ENCODE measurements at regions of chr17 and their contacts with region 1.

Region 1: GRCh38 chr17:81484195-81484979 is 28.2 kb downstream of the ACTG1 start:
- DNase-seq: peak; percentile 93
- ATAC-seq: peak; percentile 64
- H3K4me3 Mint-ChIP-seq: peak overlapping the region; percentile 52
- H3K27ac Mint-ChIP-seq: no peak overlapping the region
- H3K4me1 Mint-ChIP-seq: peaks cover 11% of the 10 kb centered on the region
- H3K27me3 Mint-ChIP-seq: peaks cover 64% of the 10 kb centered on the region
- CTCF ChIP-seq: peak; percentile 96

Region 2: DNA sequence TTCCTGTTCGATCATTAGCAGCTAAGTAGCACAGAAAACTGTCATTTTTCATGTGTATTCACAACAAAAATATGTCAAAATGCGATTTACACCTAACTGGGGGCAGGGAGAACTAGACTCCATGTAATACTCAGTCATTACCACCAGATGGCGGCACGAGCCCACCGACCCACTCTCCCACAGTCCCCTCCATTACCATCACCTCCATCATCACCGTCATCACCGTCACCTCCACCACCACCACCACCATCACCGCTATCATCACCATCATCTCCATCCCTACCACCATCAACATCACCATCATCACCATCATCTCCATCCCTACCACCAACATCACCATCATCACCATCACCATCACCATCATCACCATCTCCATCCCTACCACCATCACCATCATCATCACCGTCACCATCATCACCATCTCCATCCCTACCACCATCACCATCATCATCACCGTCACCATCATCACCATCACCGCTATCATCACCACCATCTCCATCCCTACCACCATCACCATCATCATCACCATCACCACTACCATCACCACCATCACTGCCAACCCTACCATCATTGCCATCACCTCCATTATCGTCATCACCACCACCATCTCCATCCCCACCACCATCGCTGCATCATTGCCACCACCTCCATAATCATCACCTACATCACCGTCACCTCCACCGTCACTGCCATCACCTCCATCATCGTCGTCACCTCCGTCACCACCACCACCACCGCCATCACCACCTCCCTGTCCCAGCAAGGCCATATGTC is 230.8 kb before region 1 on chr17:
- CTCF ChIA-PET with region 1: interaction called, 25 read pairs
- POLR2A ChIA-PET with region 1: no interaction called
- DNase-seq: peak; percentile 57
- ATAC-seq: peak; percentile 29; the same call in 1 of the 2 replicates
- H3K4me3 Mint-ChIP-seq: no peak overlapping the region
- H3K27ac Mint-ChIP-seq: peak overlapping the region; percentile 77; the same call in 1 of the 2 replicates
- H3K4me1 Mint-ChIP-seq: peaks cover 24% of the 10 kb centered on the region
- H3K27me3 Mint-ChIP-seq: no peaks in the 10 kb centered on the region
- CTCF ChIP-seq: peak; percentile 84

Region 3: DNA sequence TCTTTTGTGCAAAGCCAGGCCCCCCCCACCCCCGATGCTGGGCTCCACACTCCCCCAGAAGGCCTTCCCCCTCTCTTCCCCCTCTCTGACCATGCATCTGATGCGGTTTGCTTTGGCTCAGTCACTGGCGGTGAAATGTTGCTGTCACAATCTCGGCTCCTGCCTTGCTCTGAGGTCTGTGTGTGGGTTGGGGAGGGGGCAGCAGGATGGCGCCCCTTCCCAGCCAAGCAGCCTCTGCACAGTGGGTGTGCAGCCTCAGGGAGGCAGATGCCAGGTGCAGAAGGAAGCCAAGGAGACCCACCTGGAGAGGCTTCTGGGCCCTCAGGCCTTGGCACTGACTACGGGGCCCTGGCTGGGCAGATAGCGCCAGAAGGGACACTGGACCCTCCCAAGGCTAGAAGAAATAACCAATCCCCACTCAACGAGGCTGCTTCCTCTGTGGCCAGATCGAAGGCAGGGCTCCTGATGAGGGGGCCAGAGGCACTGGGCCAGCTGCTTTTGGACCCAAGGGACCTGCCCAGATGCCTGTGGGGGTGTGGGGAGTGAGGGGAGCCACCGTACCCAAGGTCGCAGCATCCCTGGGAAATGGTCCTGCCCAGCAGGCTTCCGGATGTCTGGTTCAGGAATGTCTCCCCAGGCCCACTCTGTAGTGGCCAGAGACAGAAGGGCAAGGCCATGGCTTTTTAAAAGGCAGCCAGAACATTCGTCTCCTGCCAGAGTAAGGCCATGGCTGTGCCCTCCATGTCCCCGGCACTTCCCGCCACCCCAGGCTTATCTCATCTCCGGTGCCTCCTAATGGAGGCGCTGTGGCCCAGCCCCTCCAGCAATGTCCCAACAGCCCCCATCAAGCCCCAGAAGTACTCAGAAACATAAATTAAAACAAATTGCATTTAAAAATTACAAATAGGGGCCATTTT is 145.9 kb before region 1 on chr17:
- CTCF ChIA-PET with region 1: no interaction called
- POLR2A ChIA-PET with region 1: no interaction called
- DNase-seq: no peak
- ATAC-seq: no peak
- H3K4me3 Mint-ChIP-seq: peak overlapping the region; percentile 35
- H3K27ac Mint-ChIP-seq: 0 out of 2 replicates have a peak overlapping the region, but pooled peaks have one; percentile 20
- H3K4me1 Mint-ChIP-seq: peaks cover 29% of the 10 kb centered on the region
- H3K27me3 Mint-ChIP-seq: peaks cover 46% of the 10 kb centered on the region
- CTCF ChIP-seq: no peak

Region 4: DNA sequence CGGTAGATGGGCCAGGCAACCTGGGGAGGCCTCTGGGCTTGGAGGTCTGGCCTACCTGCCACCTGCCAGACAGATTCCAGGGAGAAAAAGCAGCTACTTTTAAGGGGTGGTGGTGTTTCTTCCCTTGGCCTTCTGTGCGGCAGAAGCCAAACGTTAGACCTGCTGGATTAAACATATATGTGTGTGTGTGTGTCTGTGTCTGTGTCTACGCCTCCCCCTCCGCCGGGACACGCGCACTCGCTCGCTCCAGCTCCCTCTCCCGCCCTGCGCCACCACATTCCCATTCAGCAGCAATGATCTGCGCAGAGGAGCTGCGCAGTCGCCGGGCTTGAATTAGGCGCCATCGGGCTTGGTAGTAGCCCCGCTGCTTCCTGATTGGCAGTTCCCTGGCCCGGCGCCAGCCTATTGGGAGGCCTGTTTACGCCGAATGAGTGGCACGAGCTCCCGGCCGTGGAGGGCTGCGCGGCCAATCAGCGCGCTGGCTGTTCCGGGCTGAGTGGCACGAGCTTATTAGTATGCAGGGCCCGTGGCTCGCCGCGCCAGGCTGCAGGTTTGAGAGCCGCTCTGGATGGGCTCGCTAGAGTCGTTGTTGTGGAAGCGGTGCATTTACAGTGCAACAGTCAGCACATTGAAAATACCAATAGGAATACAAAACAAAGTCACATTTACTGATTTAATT is 89.3 kb before region 1 on chr17 and contains the start of gene BAHCC1:
- CTCF ChIA-PET with region 1: interaction called, 55 read pairs
- POLR2A ChIA-PET with region 1: interaction called, 4 read pairs
- DNase-seq: peak; percentile 100
- ATAC-seq: peak; percentile 78
- H3K4me3 Mint-ChIP-seq: peak within 1 kb of the TSS; percentile 72
- H3K27ac Mint-ChIP-seq: peak within 1 kb of the TSS; percentile 93
- H3K4me1 Mint-ChIP-seq: peaks cover 34% of the 10 kb centered on the region
- H3K27me3 Mint-ChIP-seq: peaks cover 69% of the 10 kb centered on the region
- CTCF ChIP-seq: no peak
- total RNA-seq, gene BAHCC1: 17.1 to 29.8 TPM (median 21.5 TPM) in 3 replicates

Region 5: DNA sequence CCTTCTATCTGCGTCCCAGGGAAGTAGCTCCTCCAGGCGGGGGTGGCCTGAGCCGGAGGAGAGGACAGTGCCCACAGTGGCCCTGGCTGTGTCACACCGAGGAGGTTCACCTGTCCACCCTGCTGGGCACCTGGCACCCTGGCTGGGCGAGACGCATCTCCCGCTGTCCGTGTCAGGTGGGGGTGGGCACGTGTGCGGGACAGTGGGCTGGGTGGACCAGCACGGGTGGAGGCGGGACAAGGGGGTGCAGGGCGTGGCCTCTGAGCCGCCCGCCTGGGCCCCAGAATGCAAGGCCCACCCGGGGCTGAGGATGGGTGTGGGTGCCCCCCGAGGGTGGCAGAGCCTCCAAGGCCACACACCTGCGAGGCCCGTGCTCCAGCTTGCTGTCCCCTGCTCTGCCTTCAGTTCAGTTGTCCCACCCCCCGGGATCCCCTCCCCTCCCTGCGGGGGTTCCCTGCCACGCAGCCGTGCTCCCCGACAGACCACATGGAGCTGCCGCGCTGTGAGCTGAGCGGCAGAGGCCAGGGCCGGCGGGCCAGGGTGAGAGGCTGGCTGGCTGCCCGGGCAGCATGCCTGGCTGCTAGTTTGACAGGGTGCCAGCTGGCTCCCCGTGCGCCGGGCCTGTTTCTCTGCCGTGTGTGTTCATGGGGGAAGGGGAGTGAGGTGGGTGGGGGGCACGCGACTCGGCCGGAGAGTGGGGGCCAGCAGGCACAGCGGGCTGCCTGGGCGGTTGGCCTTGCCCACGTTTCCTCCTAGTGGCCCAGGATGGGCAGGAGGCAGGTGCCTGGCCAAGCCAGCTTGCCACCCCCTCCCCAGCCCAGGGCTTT is 55.2 kb before region 1 on chr17:
- CTCF ChIA-PET with region 1: interaction called, 11 read pairs
- POLR2A ChIA-PET with region 1: no interaction called
- DNase-seq: no peak
- ATAC-seq: no peak
- H3K4me3 Mint-ChIP-seq: no peak overlapping the region
- H3K27ac Mint-ChIP-seq: no peak overlapping the region
- H3K4me1 Mint-ChIP-seq: no peaks in the 10 kb centered on the region
- H3K27me3 Mint-ChIP-seq: no peaks in the 10 kb centered on the region
- CTCF ChIP-seq: no peak

Region 6: DNA sequence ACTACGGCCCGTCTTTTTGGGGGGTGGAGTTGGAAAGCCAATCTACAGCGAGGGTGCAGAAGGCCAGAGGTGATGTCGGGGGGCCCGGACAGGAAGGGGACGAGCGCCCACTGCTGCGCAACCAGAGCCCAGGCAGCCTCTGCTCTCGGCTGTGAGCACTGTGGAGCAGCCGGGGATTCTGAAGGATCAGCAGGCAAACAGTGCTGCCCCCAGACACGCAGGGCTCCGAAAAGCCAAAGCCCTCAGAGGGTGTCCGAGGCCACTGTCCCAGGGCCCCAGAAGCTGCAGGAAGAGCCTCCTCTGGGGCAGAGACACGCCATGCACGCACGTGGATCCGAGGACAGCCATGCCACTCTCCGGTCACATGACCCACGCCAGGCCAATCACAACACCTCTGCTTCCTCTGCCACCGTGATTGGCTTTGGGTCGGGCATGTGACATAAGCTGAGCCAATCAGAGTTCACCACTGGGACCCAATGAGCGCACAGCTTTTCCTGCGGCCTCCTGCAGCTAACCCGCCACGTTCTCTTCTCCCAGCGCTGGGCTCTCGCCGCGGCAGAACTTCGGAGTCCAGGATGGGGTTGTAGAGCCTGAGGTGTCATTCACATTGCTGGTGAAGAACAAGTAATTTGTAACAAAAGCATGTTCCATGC is 12.5 kb before region 1 on chr17:
- CTCF ChIA-PET with region 1: interaction called, 11 read pairs
- POLR2A ChIA-PET with region 1: no interaction called
- DNase-seq: peak; percentile 55
- ATAC-seq: peak; percentile 69
- H3K4me3 Mint-ChIP-seq: no peak overlapping the region
- H3K27ac Mint-ChIP-seq: no peak overlapping the region
- H3K4me1 Mint-ChIP-seq: no peaks in the 10 kb centered on the region
- H3K27me3 Mint-ChIP-seq: no peaks in the 10 kb centered on the region; the same call in none of the 2 replicates
- CTCF ChIP-seq: no peak

Region 7: DNA sequence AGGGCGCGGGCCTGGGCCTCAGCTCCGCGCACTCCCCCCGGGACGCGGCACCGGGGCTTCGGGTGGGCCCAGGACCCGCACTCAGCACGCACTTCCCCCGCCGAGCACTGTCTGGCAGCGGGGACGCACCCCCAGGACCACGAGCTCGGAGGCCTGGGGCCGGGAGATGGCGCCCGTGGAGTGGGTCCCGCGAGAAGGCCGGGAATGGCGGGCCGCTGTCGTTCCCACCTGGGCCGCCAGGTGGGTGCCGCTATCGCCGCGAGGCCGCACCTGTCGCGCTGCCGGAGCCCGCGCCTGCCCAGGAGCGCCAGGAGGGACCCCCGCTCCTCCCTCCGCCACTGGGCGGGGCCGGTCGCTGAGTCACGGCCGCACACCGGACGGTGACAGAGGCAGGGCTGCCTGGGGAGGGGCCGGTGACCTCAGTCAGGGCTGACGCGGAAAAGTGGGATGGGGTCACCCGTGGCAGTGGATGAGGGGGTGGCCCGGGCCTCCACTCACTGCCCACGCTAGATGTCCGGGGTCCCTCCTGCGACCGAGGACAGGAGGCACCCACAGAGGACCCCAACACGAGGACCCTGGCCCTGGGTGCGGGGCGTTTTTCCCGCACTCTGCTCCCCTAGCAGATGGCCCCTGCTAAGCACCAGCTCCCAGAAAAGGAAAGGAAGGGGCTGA is 35.0 kb after region 1 on chr17:
- CTCF ChIA-PET with region 1: interaction called, 30 read pairs
- POLR2A ChIA-PET with region 1: interaction called, 4 read pairs
- DNase-seq: peak; percentile 68
- ATAC-seq: peak; percentile 19
- H3K4me3 Mint-ChIP-seq: peak overlapping the region; percentile 42
- H3K27ac Mint-ChIP-seq: no peak overlapping the region
- H3K4me1 Mint-ChIP-seq: peaks cover 30% of the 10 kb centered on the region
- H3K27me3 Mint-ChIP-seq: peaks cover 42% of the 10 kb centered on the region
- CTCF ChIP-seq: peak; percentile 51

Region 8: GRCh38 chr17:81576621-81577277 is 92.4 kb after region 1 on chr17:
- CTCF ChIA-PET with region 1: no interaction called
- POLR2A ChIA-PET with region 1: no interaction called
- DNase-seq: no peak
- ATAC-seq: no peak
- H3K4me3 Mint-ChIP-seq: no peak overlapping the region
- H3K27ac Mint-ChIP-seq: peak overlapping the region; percentile 37; the same call in 1 of the 2 replicates
- H3K4me1 Mint-ChIP-seq: no peaks in the 10 kb centered on the region
- H3K27me3 Mint-ChIP-seq: no peaks in the 10 kb centered on the region
- CTCF ChIP-seq: no peak

Region 9: GRCh38 chr17:81636505-81637288 is 152.3 kb after region 1 on chr17 and contains the starts of genes NPLOC4 and TSPAN10:
- CTCF ChIA-PET with region 1: no interaction called
- POLR2A ChIA-PET with region 1: no interaction called
- DNase-seq: peak; percentile 85
- ATAC-seq: peak; percentile 93
- H3K4me3 Mint-ChIP-seq: peak within 1 kb of the TSS; percentile 95
- H3K27ac Mint-ChIP-seq: peak within 1 kb of the TSS; percentile 99
- H3K4me1 Mint-ChIP-seq: peaks cover 10% of the 10 kb centered on the region
- H3K27me3 Mint-ChIP-seq: no peaks in the 10 kb centered on the region
- CTCF ChIP-seq: no peak
- total RNA-seq, gene NPLOC4: 80.3 to 89.2 TPM (median 83.5 TPM) in 3 replicates
- total RNA-seq, gene TSPAN10: 1.5 to 3.0 TPM (median 2.4 TPM) in 3 replicates

Measured in WTC11 (cell line).